HepG2 (cell line): ENCODE measurements at regions of chr16 and their contacts with region 1.

Region 1: DNA sequence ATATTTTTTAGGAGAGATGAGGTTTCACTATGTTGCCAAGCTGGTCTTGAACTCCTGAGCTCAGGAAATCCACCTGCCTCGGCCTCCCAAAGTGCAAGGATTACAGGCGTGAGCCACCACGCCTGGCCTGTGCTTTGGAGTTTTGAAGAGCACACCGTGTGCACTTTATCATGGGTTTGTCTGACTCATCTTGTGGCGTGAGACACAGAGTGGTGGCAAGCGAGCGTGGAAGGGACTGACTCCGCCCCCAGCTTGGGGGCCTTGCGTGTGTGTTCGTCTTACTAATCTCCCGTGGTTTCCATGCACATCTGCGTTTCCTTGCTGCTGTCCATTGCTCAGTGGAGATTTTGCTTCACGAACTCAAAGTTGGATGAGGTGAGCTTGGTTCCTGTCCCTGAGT is 22.9 kb downstream of the CRAMP1 start:
- DNase-seq: no peak
- ATAC-seq: no peak
- H3K4me3 ChIP-seq: no peak overlapping the region
- H3K27ac ChIP-seq: no peak overlapping the region
- H3K4me1 ChIP-seq: no peaks in the 10 kb centered on the region
- H3K27me3 ChIP-seq: no peaks in the 10 kb centered on the region
- CTCF ChIP-seq: no peak
- EP300 ChIP-seq: no peak
- POLR2A ChIP-seq: no peak
- RAD21 ChIP-seq: no peak

Region 2: GRCh38 chr16:1610276-1611017 is 24.6 kb before region 1 on chr16:
- CTCF ChIA-PET with region 1: no interaction called
- POLR2A ChIA-PET with region 1: no interaction called
- in situ Hi-C with region 1: no loop called
- intact Hi-C with region 1: loop called (anchors 1 kb)
- DNase-seq: peak; percentile 81
- ATAC-seq: peak; percentile 85
- H3K4me3 ChIP-seq: peak overlapping the region; percentile 66 to 81 (median 70)
- H3K27ac ChIP-seq: peak overlapping the region; percentile 81
- H3K4me1 ChIP-seq: peaks cover 24% of the 10 kb centered on the region
- H3K27me3 ChIP-seq: no peaks in the 10 kb centered on the region; a peak in 1 of 5 replicates
- CTCF ChIP-seq: peak; percentile 48
- EP300 ChIP-seq: no peak
- POLR2A ChIP-seq: peak; percentile 30 to 58
- RAD21 ChIP-seq: no peak

Region 3: GRCh38 chr16:1656808-1657617 is 21.9 kb after region 1 on chr16:
- CTCF ChIA-PET with region 1: no interaction called
- POLR2A ChIA-PET with region 1: no interaction called
- in situ Hi-C with region 1: no loop called
- intact Hi-C with region 1: no loop called
- DNase-seq: no peak
- ATAC-seq: no peak; the same call in 2 of the 3 replicates
- H3K4me3 ChIP-seq: no peak overlapping the region
- H3K27ac ChIP-seq: no peak overlapping the region
- H3K4me1 ChIP-seq: no peaks in the 10 kb centered on the region
- H3K27me3 ChIP-seq: no peaks in the 10 kb centered on the region
- CTCF ChIP-seq: no peak
- EP300 ChIP-seq: no peak
- POLR2A ChIP-seq: no peak
- RAD21 ChIP-seq: no peak